Sigmoid colon (tissue), 7 donors: ENCODE measurements at regions of chr4 and their contacts with region 1.

Region 1: GRCh38 chr4:143358923-143359643 is 22.4 kb downstream of the GAB1 start:
- DNase-seq: no peak
- H3K4me3 ChIP-seq: no peak overlapping the region
- H3K27ac ChIP-seq: peak overlapping the region; percentile 36 to 72 (median 62)
- H3K4me1 ChIP-seq: peaks cover 0 to 97% (median 92%) of the 10 kb centered on the region in 4 donors
- H3K27me3 ChIP-seq: no peaks in the 10 kb centered on the region
- CTCF ChIP-seq: no peak
- EP300 ChIP-seq: no peak
- POLR2A ChIP-seq: no peak

Region 2: GRCh38 chr4:143270256-143270838 is 88.7 kb before region 1 on chr4:
- intact Hi-C with region 1: no loop called
- DNase-seq: no peak
- H3K4me3 ChIP-seq: no peak overlapping the region
- H3K27ac ChIP-seq: peak overlapping the region in 1 of 4 donors; percentile 66
- H3K4me1 ChIP-seq: no peaks in the 10 kb centered on the region
- H3K27me3 ChIP-seq: no peaks in the 10 kb centered on the region
- CTCF ChIP-seq: no peak
- EP300 ChIP-seq: no peak
- POLR2A ChIP-seq: no peak

Region 3: DNA sequence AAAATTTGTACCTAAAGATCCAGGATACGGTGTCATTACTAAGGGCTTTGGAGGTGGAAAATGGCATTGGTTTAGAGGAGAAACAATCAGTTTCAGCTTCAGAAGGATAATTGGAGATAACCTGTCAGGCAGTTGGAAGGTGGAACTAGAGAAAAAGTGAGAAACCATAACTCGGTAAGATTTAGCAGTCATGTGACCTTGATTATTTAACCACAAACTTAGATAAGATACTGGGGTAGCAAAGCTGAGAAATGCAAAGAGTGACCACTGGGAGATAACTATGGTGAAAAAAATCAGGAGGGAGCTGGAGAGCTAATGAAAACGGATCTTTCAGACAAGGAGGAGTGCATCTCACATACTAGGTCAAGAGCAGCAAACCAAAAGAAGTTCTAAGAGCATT is 96.1 kb after region 1 on chr4:
- intact Hi-C with region 1: loop called (anchors 5 kb)
- DNase-seq: no peak
- H3K4me3 ChIP-seq: no peak overlapping the region
- H3K27ac ChIP-seq: no peak overlapping the region
- H3K4me1 ChIP-seq: peaks cover 0 to 11% (median 7%) of the 10 kb centered on the region in 4 donors
- H3K27me3 ChIP-seq: no peaks in the 10 kb centered on the region
- CTCF ChIP-seq: no peak
- EP300 ChIP-seq: no peak
- POLR2A ChIP-seq: no peak